ENCODE measurements at regions of chr6 and their contacts with region 1.

Region 1: GRCh38 chr6:30066577-30067459 is at the start of gene PPP1R11:
- DNase-seq: peak; percentile 100
- ATAC-seq: peak; percentile 97
- H3K4me3 ChIP-seq: peak within 1 kb of the TSS; percentile 80 to 95 (median 85)
- H3K4me3 Mint-ChIP-seq: peak within 1 kb of the TSS; percentile 93
- H3K27ac ChIP-seq: peak within 1 kb of the TSS; percentile 93 to 97
- H3K27ac Mint-ChIP-seq: peak within 1 kb of the TSS; percentile 99
- H3K4me1 ChIP-seq: peaks cover 42 to 45% of the 10 kb centered on the region in 2 donors
- H3K4me1 Mint-ChIP-seq: peaks cover 51% of the 10 kb centered on the region
- H3K27me3 ChIP-seq: peaks cover 0 to 20% (median 9%) of the 10 kb centered on the region in 4 experiments
- H3K27me3 Mint-ChIP-seq: peaks cover 17% of the 10 kb centered on the region
- CTCF ChIP-seq: no peak
- total RNA-seq, gene PPP1R11: 44.8 and 49.5 TPM in 2 replicates

Region 2: DNA sequence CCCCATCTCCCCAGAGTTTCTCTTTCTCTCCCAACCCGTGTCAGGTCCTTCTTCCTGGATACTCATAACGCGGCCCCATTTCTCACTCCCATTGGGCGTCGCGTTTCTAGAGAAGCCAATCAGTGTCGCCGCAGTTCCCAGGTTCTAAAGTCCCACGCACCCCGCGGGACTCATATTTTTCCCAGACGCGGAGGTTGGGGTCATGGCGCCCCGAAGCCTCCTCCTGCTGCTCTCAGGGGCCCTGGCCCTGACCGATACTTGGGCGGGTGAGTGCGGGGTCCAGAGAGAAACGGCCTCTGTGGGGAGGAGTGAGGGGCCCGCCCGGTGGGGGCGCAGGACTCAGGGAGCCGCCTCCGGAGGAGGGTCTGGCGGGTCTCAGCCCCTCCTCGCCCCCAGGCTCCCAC is 343.6 kb before region 1 on chr6 and contains the start of gene HLA-F:
- CTCF ChIA-PET with region 1: no interaction called
- POLR2A ChIA-PET with region 1: interaction called, 3 read pairs
- intact Hi-C with region 1: loop called (anchors 5 kb)
- DNase-seq: peak; percentile 96
- ATAC-seq: peak; percentile 91
- H3K4me3 ChIP-seq: peak within 1 kb of the TSS; percentile 75 to 100 (median 100)
- H3K4me3 Mint-ChIP-seq: peak within 1 kb of the TSS; percentile 96
- H3K27ac ChIP-seq: peak within 1 kb of the TSS; percentile 99 to 100
- H3K27ac Mint-ChIP-seq: peak within 1 kb of the TSS; percentile 98
- H3K4me1 ChIP-seq: peaks cover 29 to 43% of the 10 kb centered on the region in 2 donors
- H3K4me1 Mint-ChIP-seq: peaks cover 55% of the 10 kb centered on the region
- H3K27me3 ChIP-seq: no peaks in the 10 kb centered on the region
- H3K27me3 Mint-ChIP-seq: no peaks in the 10 kb centered on the region
- CTCF ChIP-seq: no peak
- total RNA-seq, gene HLA-F: 895 and 911 TPM in 2 replicates

Region 3: GRCh38 chr6:29926413-29927274 is 140.2 kb before region 1 on chr6:
- CTCF ChIA-PET with region 1: no interaction called
- POLR2A ChIA-PET with region 1: no interaction called
- intact Hi-C with region 1: loop called (anchors 5 kb)
- DNase-seq: peak; percentile 89
- ATAC-seq: peak; percentile 84
- H3K4me3 ChIP-seq: peak overlapping the region; percentile 59 to 88 (median 74)
- H3K4me3 Mint-ChIP-seq: peak overlapping the region; percentile 93
- H3K27ac ChIP-seq: peak overlapping the region; percentile 91 to 93
- H3K27ac Mint-ChIP-seq: peak overlapping the region; percentile 95
- H3K4me1 ChIP-seq: peaks cover 4 to 17% of the 10 kb centered on the region in 2 donors
- H3K4me1 Mint-ChIP-seq: peaks cover 14% of the 10 kb centered on the region
- H3K27me3 ChIP-seq: no peaks in the 10 kb centered on the region
- H3K27me3 Mint-ChIP-seq: no peaks in the 10 kb centered on the region
- CTCF ChIP-seq: no peak

Region 4: GRCh38 chr6:30020626-30021025 is 46.2 kb before region 1 on chr6:
- CTCF ChIA-PET with region 1: no interaction called
- POLR2A ChIA-PET with region 1: no interaction called
- intact Hi-C with region 1: no loop called
- DNase-seq: peak; percentile 24
- ATAC-seq: no peak
- H3K4me3 ChIP-seq: no peak overlapping the region
- H3K4me3 Mint-ChIP-seq: no peak overlapping the region
- H3K27ac ChIP-seq: no peak overlapping the region
- H3K27ac Mint-ChIP-seq: no peak overlapping the region
- H3K4me1 ChIP-seq: peaks cover 7 to 14% of the 10 kb centered on the region in 2 donors
- H3K4me1 Mint-ChIP-seq: peaks cover 10% of the 10 kb centered on the region
- H3K27me3 ChIP-seq: no peaks in the 10 kb centered on the region
- H3K27me3 Mint-ChIP-seq: no peaks in the 10 kb centered on the region
- CTCF ChIP-seq: no peak

Region 5: DNA sequence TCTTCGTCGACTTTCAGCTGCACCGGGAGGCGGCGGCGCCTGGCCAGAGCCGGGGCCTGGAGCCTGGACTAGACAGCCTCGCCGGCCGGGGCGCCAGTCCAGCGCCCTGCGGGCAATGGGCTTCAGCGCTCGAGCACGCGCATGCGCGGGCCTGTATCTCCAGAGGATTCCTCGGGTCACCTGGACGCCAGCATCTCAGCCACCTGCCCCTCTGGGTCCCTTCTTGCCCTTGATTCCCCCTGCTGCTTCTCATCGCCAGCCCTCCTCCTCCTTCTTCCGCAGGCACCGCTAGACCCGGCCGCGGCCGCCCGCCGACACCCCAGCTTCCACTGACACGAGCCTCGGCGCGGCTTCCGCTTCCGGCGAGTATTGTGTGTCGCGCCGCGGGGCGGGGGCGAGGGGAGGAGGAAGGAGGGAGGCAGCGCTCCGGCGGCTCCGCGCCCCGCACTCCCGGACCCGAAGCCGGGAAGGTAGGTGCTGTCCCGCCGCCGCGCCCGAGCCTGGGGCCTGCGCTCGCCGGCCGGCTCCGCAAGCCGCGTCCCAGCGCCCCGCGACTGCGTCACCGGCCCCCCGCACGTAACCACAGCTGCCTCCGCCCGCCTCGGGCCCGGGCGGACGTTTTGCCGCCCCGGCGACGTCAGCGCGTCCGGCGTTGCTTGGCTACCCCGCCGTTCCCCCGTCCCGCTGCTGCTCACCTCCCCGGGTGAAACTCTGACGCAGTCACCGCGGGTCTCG is 259.9 kb after region 1 on chr6 and contains the start of gene TRIM39:
- CTCF ChIA-PET with region 1: no interaction called
- POLR2A ChIA-PET with region 1: no interaction called
- intact Hi-C with region 1: loop called (anchors 1 kb)
- DNase-seq: peak; percentile 96
- ATAC-seq: peak; percentile 69
- H3K4me3 ChIP-seq: peak within 1 kb of the TSS; percentile 72 to 97 (median 90)
- H3K4me3 Mint-ChIP-seq: peak within 1 kb of the TSS; percentile 99
- H3K27ac ChIP-seq: peak within 1 kb of the TSS; percentile 98 to 99
- H3K27ac Mint-ChIP-seq: peak within 1 kb of the TSS; percentile 99
- H3K4me1 ChIP-seq: peaks cover 21 to 31% of the 10 kb centered on the region in 2 donors
- H3K4me1 Mint-ChIP-seq: peaks cover 52% of the 10 kb centered on the region
- H3K27me3 ChIP-seq: no peaks in the 10 kb centered on the region
- H3K27me3 Mint-ChIP-seq: no peaks in the 10 kb centered on the region
- CTCF ChIP-seq: no peak
- total RNA-seq, gene TRIM39: 28.2 and 31.4 TPM in 2 replicates

Region 6: DNA sequence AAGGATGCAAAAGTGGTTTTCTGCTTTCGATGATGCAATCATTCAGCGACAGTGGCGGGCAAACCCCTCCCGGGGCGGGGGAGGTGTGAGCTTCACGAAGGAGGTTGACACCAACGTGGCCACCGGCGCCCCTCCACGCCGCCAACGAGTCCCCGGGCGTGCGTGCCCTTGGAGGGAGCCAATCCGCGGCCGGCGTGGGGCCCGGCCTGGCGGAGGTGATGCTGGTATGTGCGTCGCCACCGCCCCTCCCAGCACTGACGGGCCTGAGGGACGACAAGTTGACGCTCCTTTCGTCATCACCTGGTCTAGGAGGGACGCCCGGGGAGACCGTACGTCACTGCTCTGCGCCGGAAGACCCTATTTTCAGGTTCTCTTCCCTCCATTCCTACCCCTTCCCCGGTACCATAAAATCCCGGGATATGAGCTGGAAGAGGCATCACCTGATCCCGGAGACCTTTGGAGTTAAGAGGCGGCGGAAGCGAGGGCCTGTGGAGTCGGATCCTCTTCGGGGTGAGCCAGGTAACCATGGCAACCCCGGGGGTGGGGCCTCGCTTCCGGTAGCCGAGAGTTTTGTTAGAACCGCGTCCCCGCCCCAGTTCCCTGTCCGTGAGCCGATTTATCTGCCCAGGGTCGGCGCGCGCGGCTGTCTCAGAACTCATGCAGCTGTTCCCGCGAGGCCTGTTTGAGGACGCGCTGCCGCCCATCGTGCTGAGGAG is 1905.3 kb after region 1 on chr6 and contains the start of gene DXO:
- CTCF ChIA-PET with region 1: no interaction called
- POLR2A ChIA-PET with region 1: interaction called, 3 read pairs
- intact Hi-C with region 1: loop called (anchors 10 kb)
- DNase-seq: peak; percentile 100
- ATAC-seq: peak; percentile 89
- H3K4me3 ChIP-seq: peak within 1 kb of the TSS; percentile 51 to 92 (median 80)
- H3K4me3 Mint-ChIP-seq: peak within 1 kb of the TSS; percentile 98
- H3K27ac ChIP-seq: peak within 1 kb of the TSS; percentile 96 to 100
- H3K27ac Mint-ChIP-seq: peak within 1 kb of the TSS; percentile 100
- H3K4me1 ChIP-seq: peaks cover 18 to 23% of the 10 kb centered on the region in 2 donors
- H3K4me1 Mint-ChIP-seq: peaks cover 34% of the 10 kb centered on the region
- H3K27me3 ChIP-seq: no peaks in the 10 kb centered on the region
- H3K27me3 Mint-ChIP-seq: no peaks in the 10 kb centered on the region
- CTCF ChIP-seq: no peak
- total RNA-seq, gene DXO: 33.9 and 36.1 TPM in 2 replicates